ENCODE measurements at regions of chr4 and their contacts with region 1.

Region 1: DNA sequence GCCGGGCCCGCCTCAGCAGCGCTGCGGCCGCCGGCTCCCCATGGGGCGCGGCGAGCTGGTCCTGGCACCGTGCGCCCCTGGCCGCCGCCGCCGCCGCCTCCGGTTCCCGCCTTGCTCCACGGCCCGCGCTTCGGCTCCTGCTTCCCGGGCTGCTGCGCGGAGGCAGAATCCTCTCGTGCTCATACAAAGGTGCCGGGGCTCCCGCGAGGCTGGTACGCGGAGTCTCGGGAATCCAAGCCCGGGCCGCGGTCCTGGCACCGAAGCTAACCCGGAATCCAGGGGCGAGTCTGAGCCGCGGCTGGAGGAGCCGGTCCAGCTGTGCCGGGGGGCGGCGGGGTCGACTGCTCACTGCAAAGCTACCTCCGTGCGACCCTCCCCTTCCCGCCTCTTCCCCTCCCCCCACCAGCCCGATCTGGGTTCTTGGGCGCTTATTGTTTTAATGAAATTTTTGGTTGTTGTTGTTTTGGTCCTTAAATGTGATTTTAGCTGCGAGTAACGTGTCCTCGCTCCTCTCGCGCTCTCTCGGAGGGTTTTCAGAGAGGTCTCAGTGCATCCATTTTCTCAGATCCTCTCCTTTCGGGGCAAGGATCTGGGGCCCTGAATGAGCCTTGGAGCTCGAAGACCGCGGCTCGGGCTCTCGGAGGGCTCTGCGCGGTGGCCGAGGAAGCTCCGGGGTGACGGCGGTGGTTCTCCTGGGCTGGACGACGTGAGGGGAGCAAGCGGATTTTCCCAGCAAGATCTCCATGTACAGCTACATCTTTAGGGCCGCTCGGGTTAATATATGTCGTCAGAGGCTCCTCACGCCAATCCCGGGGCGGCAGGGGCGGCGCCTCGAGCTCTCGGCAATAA is at the start of gene HAND2:
- DNase-seq: peak; percentile 91
- H3K4me3 ChIP-seq: peak within 1 kb of the TSS; percentile 61 to 92
- H3K27ac ChIP-seq: peak within 1 kb of the TSS; percentile 99
- H3K4me1 ChIP-seq: peaks cover 0 to 3% of the 10 kb centered on the region in 2 experiments; a peak in 2 of 4 replicates
- H3K27me3 ChIP-seq: no peaks in the 10 kb centered on the region
- CTCF ChIP-seq: no peak
- EP300 ChIP-seq: peak; percentile 16 to 25; a peak in 2 of 4 replicates
- RAD21 ChIP-seq: no peak
- polyA plus RNA-seq, gene HAND2: 94.2 and 106 TPM in 2 replicates

Region 2: GRCh38 chr4:173516621-173517524 is 12.8 kb before region 1 on chr4:
- CTCF ChIA-PET with region 1: interaction called, 4 read pairs
- POLR2A ChIA-PET with region 1: interaction called, 142 read pairs
- DNase-seq: peak; percentile 70
- H3K4me3 ChIP-seq: peak overlapping the region; percentile 50 to 58
- H3K27ac ChIP-seq: peak overlapping the region; percentile 99
- H3K4me1 ChIP-seq: peaks cover 20 to 45% of the 10 kb centered on the region in 2 experiments
- H3K27me3 ChIP-seq: no peaks in the 10 kb centered on the region
- CTCF ChIP-seq: peak; percentile 29
- EP300 ChIP-seq: no peak
- RAD21 ChIP-seq: 0 out of 2 replicates have a peak, but pooled peaks have one; percentile 14

Region 3: DNA sequence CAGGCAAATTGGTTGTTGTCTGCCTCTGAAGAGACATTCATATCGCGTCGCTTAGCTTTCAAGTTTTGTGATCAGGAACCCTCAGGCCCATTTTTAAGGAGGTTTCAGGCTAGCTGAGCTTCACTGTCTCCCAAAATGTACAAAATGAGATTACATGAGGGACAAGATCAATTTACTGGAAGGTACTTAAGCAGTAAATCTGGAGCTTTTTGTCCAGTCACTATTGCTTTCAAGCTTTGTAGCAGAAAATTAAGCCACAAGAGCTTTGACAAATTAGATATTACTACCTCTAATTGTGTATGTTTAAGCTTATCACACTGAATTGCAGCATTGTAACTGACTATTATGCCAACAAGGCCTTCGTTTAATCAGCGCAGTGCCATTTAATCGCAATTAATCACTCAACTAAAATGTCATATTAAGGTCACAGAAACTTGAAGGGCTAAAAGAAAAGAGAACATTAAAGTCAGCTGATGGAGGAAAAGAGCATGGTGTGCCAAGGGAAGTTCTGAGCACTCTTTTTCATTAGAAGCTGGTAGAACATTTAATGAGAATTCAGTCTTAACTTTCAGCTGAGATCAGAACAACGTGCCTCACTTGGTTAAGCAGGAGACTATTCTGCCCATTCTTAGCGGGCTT is 400.7 kb after region 1 on chr4:
- CTCF ChIA-PET with region 1: interaction called, 5 read pairs
- POLR2A ChIA-PET with region 1: interaction called, 101 read pairs
- DNase-seq: peak; percentile 49
- H3K4me3 ChIP-seq: no peak overlapping the region
- H3K27ac ChIP-seq: peak overlapping the region; percentile 28 to 100; a peak in 3 of 4 replicates
- H3K4me1 ChIP-seq: peaks cover 22 to 62% of the 10 kb centered on the region in 2 experiments; a peak in 3 of 4 replicates
- H3K27me3 ChIP-seq: no peaks in the 10 kb centered on the region
- CTCF ChIP-seq: no peak
- EP300 ChIP-seq: peak; percentile 40 to 97
- RAD21 ChIP-seq: peak; percentile 12

Region 4: GRCh38 chr4:174012135-174012885 is 482.6 kb after region 1 on chr4:
- CTCF ChIA-PET with region 1: interaction called, 3 read pairs
- POLR2A ChIA-PET with region 1: interaction called, 57 read pairs
- DNase-seq: no peak
- H3K4me3 ChIP-seq: no peak overlapping the region
- H3K27ac ChIP-seq: peak overlapping the region; percentile 16 to 100; a peak in 3 of 4 replicates
- H3K4me1 ChIP-seq: peaks cover 7 to 42% of the 10 kb centered on the region in 2 experiments; a peak in 3 of 4 replicates
- H3K27me3 ChIP-seq: no peaks in the 10 kb centered on the region
- CTCF ChIP-seq: no peak
- EP300 ChIP-seq: no peak
- RAD21 ChIP-seq: no peak

Region 5: GRCh38 chr4:174135936-174136406 is 606.3 kb after region 1 on chr4:
- CTCF ChIA-PET with region 1: no interaction called
- POLR2A ChIA-PET with region 1: interaction called, 24 read pairs
- DNase-seq: peak; percentile 57
- H3K4me3 ChIP-seq: peak overlapping the region; percentile 42 to 55
- H3K27ac ChIP-seq: peak overlapping the region; percentile 56 to 100; a peak in 3 of 4 replicates
- H3K4me1 ChIP-seq: peaks cover 10 to 38% of the 10 kb centered on the region in 2 experiments; a peak in 3 of 4 replicates
- H3K27me3 ChIP-seq: no peaks in the 10 kb centered on the region
- CTCF ChIP-seq: no peak
- EP300 ChIP-seq: peak in 1 of 2 experiments; percentile 92; a peak in 2 of 4 replicates
- RAD21 ChIP-seq: 0 out of 2 replicates have a peak, but pooled peaks have one; percentile 6

Region 6: DNA sequence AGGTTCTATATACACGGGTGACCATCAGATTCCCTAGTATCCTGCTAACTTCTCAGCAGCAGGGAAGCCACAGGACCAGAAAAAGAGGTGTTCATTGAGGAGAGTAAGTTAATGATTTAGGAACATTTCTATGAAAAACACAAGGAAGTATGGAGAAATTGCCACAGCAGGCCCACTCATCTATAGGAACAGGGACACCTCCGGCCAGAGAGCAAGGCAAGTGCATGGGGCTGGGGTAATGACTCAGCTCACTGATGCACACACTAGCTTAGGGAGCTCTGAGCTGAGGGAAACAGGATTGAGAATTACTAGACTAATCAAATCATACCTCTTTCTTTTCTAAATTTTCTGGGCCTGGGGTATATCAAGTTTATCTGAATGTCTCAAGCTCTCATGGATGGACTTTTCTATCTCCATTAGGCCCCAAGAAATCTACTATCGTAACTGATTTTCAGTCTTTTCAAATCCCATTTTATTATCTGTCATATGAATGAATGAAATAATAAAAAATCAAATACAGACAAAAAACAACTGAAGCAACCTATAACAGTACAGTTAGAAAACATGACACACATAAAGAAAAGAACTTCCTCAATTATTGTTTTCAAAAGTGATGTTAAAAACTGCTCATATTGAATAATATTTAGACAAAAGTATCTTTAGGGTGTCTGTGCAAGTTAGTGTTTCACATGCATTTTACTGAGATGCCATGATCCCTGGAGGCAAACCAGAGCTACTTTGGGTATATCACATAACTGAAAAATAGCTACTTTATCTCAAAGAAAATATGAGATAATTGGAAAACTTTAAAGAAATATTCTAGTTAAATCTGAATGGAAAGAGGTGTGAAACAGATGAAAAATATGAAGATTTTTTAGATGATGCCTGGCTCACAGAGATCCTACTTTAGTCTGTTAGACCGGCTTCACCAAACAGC is 664.0 kb after region 1 on chr4:
- CTCF ChIA-PET with region 1: no interaction called
- POLR2A ChIA-PET with region 1: interaction called, 16 read pairs
- DNase-seq: peak; percentile 42
- H3K4me3 ChIP-seq: no peak overlapping the region
- H3K27ac ChIP-seq: peak overlapping the region in 1 of 2 experiments; percentile 100; a peak in 3 of 4 replicates
- H3K4me1 ChIP-seq: peaks cover 0 to 46% of the 10 kb centered on the region in 2 experiments; a peak in 2 of 4 replicates
- H3K27me3 ChIP-seq: no peaks in the 10 kb centered on the region
- CTCF ChIP-seq: no peak
- EP300 ChIP-seq: peak in 1 of 2 experiments; percentile 98; a peak in 3 of 4 replicates
- RAD21 ChIP-seq: peak; percentile 33; the same call in 1 of the 2 replicates

Region 7: GRCh38 chr4:174260099-174260498 is 730.4 kb after region 1 on chr4:
- CTCF ChIA-PET with region 1: no interaction called
- POLR2A ChIA-PET with region 1: interaction called, 10 read pairs
- DNase-seq: peak; percentile 30
- H3K4me3 ChIP-seq: peak overlapping the region in 1 of 2 experiments; percentile 33; a peak in 2 of 4 replicates
- H3K27ac ChIP-seq: peak overlapping the region; percentile 30 to 98; a peak in 3 of 4 replicates
- H3K4me1 ChIP-seq: peaks cover 32 to 36% of the 10 kb centered on the region in 2 experiments
- H3K27me3 ChIP-seq: no peaks in the 10 kb centered on the region
- CTCF ChIP-seq: no peak
- EP300 ChIP-seq: peak in 1 of 2 experiments; percentile 94; a peak in 3 of 4 replicates
- RAD21 ChIP-seq: no peak